ENCODE measurements at regions of chr2 and their contacts with region 1.

Region 1: GRCh38 chr2:48600204-48600813 is 17.3 kb upstream of the GTF2A1L start:
- DNase-seq: peak; percentile 10
- H3K4me3 ChIP-seq: no peak overlapping the region
- H3K27me3 ChIP-seq: no peaks in the 10 kb centered on the region
- CTCF ChIP-seq: peak; percentile 75

Region 2: DNA sequence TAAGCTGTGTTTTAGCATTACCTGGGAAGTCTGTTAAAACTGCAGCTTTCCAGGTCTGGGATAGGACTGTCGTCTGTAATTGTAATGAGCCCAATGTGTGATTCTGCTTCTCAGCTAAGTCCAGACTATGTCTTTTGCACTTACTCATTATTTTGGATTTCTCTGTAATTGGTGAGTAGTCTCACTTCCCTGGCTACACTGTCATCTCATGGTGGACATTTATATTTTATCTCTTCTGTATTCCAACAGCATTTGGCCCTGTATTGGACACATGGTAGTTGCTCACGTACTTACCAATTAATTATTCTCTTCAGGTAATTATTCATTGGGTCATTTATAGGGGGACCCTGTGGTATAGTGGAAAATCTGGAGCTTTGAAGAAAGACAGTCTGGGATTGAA is 127.3 kb after region 1 on chr2:
- CTCF ChIA-PET with region 1: interaction called, 12 read pairs
- POLR2A ChIA-PET with region 1: no interaction called
- DNase-seq: no peak
- H3K4me3 ChIP-seq: no peak overlapping the region
- H3K27me3 ChIP-seq: no peaks in the 10 kb centered on the region
- CTCF ChIP-seq: peak; percentile 18; the same call in 1 of the 2 replicates

Measured in BJ (cell line).